K562 (cell line): ENCODE measurements at regions of chr2 and their contacts with region 1.

Region 1: DNA sequence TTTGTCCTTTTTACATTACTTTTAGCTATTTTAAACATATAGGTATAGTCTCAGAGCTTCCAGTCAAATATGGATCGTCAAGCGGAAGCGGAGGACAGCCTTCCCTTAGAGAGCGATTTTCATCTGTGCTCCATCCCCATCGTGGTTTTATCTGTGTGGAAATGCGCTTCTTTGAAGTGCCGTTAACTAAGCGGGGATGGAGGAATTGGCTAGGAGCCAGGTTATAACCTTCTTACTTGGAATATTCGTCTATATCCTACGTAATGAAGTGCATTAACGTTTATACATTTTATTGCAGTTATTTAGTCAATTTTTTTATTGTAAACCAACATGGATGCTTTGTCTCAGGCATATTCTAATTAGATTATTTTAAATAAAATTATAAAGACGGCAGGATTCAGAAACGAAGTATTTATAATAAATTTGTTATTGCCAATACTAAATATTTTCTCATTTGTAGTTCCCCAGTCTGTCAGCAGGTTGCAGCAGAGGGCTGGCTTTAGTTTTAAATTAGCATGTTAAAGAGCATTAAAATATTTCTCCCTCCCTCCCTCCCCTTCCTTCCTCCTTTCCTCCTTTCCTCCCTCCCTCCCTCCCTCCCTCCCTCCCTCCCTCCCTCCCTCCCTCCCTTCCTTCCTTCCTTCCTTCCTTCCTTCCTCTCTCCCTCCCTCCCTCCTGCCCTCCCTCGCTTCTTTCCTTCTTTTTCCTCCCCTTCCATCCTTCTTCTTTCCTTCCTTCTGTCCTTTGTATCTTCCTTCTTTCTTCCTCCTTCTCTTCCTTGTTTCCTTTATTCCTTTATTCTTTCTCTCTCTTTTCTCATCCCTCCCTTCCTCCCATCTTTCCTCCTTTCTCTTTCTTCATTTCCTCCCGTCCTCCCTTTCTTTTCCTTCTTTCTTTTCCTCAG is 80.6 kb upstream of the DOCK10 start:
- DNase-seq: peak in 1 of 4 experiments; percentile 8
- ATAC-seq: no peak
- H3K4me3 ChIP-seq: no peak overlapping the region
- H3K27ac ChIP-seq: no peak overlapping the region
- H3K4me1 ChIP-seq: no peaks in the 10 kb centered on the region
- H3K27me3 ChIP-seq: no peaks in the 10 kb centered on the region
- CTCF ChIP-seq: peak in 1 of 3 experiments; percentile 33; a peak in 1 of 6 replicates
- EP300 ChIP-seq: no peak
- POLR2A ChIP-seq: no peak
- RAD21 ChIP-seq: peak in 1 of 2 experiments; percentile 54; a peak in 3 of 4 replicates

Region 2: DNA sequence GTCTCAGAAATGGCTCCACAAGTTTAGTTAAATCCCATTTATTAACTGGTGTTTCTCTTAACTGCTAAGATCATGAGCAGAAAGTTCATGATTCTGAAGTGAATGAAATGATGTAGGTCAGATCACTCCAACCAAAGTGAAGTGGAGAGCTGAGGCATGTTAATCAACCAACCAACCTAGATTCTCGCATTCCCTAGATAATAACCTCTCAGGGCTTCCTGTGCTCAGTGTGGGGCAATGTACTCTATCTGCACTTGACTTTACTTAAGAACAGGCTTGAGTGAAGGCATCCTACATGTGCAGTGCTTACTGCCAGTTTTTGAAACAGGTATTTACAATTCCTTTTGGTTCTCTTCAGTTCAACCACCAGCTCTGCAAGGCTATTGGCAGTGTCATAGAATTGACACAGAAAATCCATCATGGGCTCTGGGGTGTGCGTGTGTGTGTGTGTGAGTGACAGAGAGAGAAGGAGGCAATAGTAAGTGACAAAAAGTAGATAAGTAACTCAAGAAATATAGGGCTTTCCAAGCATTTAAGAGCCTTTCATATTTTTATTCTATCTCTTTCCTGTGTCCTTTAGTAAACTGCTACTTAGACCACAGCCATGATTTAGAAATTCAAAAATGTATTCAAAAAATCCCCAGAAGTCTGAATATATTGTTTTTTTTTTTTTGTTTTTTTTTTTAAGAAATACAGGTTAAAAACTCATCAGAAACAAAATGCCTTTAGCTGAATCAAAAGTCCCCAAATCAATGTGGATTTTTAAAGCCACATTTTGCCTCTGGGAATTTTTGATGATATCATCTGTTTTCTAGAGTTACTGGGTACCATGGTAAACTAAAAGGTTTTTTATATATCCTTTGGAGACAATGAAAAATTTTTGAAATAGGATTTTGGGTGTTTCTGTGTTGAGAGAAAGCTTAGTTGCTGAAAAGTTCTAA is 109.1 kb before region 1 on chr2:
- CTCF ChIA-PET with region 1: no interaction called
- POLR2A ChIA-PET with region 1: no interaction called
- in situ Hi-C with region 1: no loop called
- intact Hi-C with region 1: no loop called
- DNase-seq: no peak
- ATAC-seq: no peak
- H3K4me3 ChIP-seq: no peak overlapping the region
- H3K27ac ChIP-seq: no peak overlapping the region
- H3K4me1 ChIP-seq: no peaks in the 10 kb centered on the region
- H3K27me3 ChIP-seq: no peaks in the 10 kb centered on the region
- CTCF ChIP-seq: no peak
- EP300 ChIP-seq: no peak
- POLR2A ChIP-seq: no peak
- RAD21 ChIP-seq: no peak

Region 3: DNA sequence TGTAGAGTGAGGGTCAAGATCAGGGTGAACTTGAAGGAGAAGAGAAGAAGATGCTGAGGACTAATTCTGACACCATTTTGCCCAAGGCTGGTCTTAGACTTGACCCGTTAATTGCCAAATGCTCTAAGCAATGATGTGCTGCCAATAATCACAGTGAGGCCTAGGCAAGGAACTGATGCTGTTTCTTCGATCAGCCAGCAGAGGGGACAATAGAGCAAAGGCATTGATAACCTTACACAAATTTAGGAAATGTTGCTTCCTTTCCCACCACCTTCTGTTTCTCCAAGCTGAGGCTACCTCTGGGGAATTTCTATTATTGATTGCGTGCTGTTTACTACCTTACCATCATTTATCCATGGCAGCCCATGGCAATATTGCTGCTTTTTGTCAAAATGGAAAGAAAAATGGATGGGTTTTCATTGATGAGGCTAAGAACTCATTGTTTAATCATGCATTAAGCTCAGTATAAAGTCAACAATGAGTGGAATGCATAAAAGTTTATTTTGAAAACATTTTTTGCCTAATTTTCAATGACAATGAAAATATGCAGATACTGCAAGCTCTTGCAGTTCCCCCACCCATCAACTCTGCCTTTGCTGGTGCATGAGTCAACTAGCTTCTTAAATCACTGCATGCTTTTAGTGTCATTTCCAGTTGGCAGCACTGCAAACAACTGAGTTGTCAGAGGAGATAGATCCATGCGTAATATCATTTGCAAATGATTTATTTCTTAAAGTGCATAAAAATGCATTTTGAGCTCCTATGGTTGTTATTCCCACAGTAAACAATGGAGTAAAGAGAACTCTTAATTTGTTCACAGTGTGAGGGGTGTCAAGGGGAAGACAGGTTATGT is 160.2 kb after region 1 on chr2:
- CTCF ChIA-PET with region 1: no interaction called
- POLR2A ChIA-PET with region 1: no interaction called
- in situ Hi-C with region 1: no loop called
- intact Hi-C with region 1: loop called (anchors 10 kb)
- DNase-seq: peak in 3 of 4 experiments; percentile 8 to 17 (median 8)
- ATAC-seq: no peak
- H3K4me3 ChIP-seq: no peak overlapping the region
- H3K27ac ChIP-seq: no peak overlapping the region
- H3K4me1 ChIP-seq: no peaks in the 10 kb centered on the region
- H3K27me3 ChIP-seq: no peaks in the 10 kb centered on the region
- CTCF ChIP-seq: peak; percentile 36 to 47 (median 45); a peak in 4 of 6 replicates
- EP300 ChIP-seq: no peak
- POLR2A ChIP-seq: no peak
- RAD21 ChIP-seq: peak; percentile 48 to 68

Region 4: GRCh38 chr2:225458431-225459117 is 335.7 kb after region 1 on chr2:
- CTCF ChIA-PET with region 1: no interaction called
- POLR2A ChIA-PET with region 1: no interaction called
- in situ Hi-C with region 1: no loop called
- intact Hi-C with region 1: loop called (anchors 10 kb)
- DNase-seq: no peak
- ATAC-seq: no peak
- H3K4me3 ChIP-seq: no peak overlapping the region
- H3K27ac ChIP-seq: no peak overlapping the region
- H3K4me1 ChIP-seq: no peaks in the 10 kb centered on the region; a peak in 2 of 5 replicates
- H3K27me3 ChIP-seq: no peaks in the 10 kb centered on the region
- CTCF ChIP-seq: no peak
- EP300 ChIP-seq: no peak
- POLR2A ChIP-seq: no peak
- RAD21 ChIP-seq: no peak